Mammary epithelial cell (primary cell): ENCODE measurements at regions of chr1 and their contacts with region 1.

Region 1: DNA sequence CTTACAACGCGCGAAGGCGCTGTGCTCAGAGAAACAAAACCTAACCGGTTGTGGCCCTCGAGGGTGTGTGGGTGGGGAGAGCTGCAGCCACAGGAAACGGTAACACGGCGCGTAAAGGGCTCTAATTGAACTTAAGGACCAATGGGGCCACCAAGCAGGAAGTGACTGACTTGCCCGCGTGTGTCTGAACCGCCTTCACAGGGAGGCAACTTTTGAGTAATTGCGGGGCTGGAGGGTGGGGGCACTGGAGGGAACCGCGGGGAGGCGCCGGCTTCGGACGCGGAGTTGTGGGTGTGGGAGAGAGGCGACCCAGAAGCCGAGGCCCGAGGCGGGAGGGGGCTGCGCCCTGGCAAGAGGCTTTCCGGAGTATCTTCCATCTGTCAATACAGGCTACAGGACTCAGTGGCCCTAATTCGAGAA is 577 bp upstream of the PNRC2 start:
- DNase-seq: peak; percentile 88
- H3K4me3 ChIP-seq: peak overlapping the region; percentile 71 to 99 (median 96)
- H3K27ac ChIP-seq: peak overlapping the region; percentile 95
- H3K4me1 ChIP-seq: peaks cover 37% of the 10 kb centered on the region
- H3K27me3 ChIP-seq: no peaks in the 10 kb centered on the region
- CTCF ChIP-seq: peak in 1 of 2 donors; percentile 44

Region 2: GRCh38 chr1:23809751-23810171 is 149.3 kb before region 1 on chr1:
- CTCF ChIA-PET with region 1: no interaction called
- dilution Hi-C with region 1: no loop called
- in situ Hi-C with region 1: no loop called
- intact Hi-C with region 1: loop called (anchors 5 kb)
- DNase-seq: peak; percentile 45
- H3K4me3 ChIP-seq: no peak overlapping the region
- H3K27ac ChIP-seq: no peak overlapping the region
- H3K4me1 ChIP-seq: no peaks in the 10 kb centered on the region
- H3K27me3 ChIP-seq: no peaks in the 10 kb centered on the region
- CTCF ChIP-seq: peak; percentile 91

Region 3: DNA sequence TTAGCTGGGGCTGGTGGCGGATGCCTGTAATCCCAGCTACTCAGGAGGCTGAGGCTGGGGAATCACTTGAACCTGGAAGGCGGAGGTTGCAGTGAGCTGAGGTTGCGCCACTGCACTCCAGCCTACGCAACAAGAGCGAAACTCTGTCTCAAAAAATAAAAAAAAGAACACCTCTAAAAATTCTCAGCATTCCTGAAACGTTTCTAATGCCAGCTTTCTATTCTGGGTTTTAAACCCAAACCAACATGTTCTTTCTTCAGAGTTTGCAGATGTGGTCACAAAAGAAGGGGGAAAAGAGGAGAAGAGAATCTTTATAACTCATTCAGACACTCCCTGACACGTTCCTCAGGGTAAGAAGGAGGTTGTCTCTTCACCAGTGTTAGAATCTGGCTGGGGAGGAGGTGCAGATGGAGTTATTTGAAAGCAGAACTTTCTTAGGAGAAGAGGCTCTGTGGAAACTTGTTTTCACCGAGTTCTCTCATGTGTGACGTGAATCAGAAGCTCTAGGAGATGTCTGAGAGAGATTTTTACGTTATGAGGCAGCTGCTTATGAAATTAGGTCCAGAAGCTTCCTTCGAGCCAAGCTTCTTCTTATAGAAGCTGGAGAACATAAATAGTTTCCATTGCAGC is 28.1 kb before region 1 on chr1:
- CTCF ChIA-PET with region 1: interaction called, 5 read pairs
- dilution Hi-C with region 1: no loop called
- in situ Hi-C with region 1: no loop called
- intact Hi-C with region 1: loop called (anchors 2 kb)
- DNase-seq: peak; percentile 75
- H3K4me3 ChIP-seq: peak overlapping the region; percentile 27 to 30 (median 27)
- H3K27ac ChIP-seq: peak overlapping the region; percentile 73
- H3K4me1 ChIP-seq: peaks cover 8% of the 10 kb centered on the region
- H3K27me3 ChIP-seq: no peaks in the 10 kb centered on the region
- CTCF ChIP-seq: no peak

Region 4: DNA sequence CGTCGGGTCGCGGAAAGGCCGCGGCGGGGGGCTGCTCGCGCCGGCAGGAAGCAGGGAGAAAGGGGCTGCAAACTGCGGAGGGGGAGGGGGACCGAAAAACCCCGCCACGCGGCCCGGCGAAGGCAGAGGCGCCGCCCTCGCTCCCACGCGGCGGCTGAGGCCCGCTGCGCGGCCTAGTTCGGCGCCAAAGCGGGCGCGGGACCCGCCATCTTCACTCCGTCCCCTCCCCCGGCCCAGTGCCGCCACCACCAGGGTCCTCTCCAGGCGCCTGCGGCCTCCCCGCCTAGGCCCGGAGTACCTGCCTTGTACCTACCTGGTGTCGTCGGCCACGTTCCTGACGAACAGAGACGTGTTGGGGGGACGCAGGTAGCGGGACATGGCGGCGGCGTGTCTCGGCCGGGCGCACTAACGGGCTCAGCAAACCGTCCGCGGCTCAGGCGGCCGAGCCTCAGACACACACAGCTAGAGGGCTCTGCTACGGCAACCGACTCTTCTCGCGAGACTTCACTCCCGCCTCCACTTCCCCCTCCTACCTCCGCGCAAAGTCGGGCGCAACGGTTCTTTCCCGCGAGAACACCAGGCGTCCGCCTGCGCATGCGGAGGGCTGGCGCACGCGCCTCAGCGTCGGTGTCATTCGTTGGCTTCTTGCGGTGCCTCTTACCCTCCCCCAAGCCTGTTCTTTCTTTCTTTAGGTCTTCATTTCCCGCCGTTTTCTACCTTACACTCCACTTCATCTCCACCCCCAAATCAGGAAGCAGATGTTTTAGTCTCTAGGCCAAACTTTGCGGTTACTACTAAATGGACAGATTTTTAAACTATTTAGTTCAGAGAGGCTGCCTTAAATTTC is 21.1 kb after region 1 on chr1 and contains the start of gene SRSF10:
- CTCF ChIA-PET with region 1: no interaction called
- dilution Hi-C with region 1: no loop called
- in situ Hi-C with region 1: no loop called
- intact Hi-C with region 1: loop called (anchors 2 kb)
- DNase-seq: peak; percentile 98
- H3K4me3 ChIP-seq: peak within 1 kb of the TSS; percentile 91 to 99 (median 95)
- H3K27ac ChIP-seq: peak within 1 kb of the TSS; percentile 79
- H3K4me1 ChIP-seq: peaks cover 47% of the 10 kb centered on the region
- H3K27me3 ChIP-seq: no peaks in the 10 kb centered on the region
- CTCF ChIP-seq: peak in 1 of 2 donors; percentile 41
- total RNA-seq, gene SRSF10: 64.2 to 94.7 TPM

Region 5: DNA sequence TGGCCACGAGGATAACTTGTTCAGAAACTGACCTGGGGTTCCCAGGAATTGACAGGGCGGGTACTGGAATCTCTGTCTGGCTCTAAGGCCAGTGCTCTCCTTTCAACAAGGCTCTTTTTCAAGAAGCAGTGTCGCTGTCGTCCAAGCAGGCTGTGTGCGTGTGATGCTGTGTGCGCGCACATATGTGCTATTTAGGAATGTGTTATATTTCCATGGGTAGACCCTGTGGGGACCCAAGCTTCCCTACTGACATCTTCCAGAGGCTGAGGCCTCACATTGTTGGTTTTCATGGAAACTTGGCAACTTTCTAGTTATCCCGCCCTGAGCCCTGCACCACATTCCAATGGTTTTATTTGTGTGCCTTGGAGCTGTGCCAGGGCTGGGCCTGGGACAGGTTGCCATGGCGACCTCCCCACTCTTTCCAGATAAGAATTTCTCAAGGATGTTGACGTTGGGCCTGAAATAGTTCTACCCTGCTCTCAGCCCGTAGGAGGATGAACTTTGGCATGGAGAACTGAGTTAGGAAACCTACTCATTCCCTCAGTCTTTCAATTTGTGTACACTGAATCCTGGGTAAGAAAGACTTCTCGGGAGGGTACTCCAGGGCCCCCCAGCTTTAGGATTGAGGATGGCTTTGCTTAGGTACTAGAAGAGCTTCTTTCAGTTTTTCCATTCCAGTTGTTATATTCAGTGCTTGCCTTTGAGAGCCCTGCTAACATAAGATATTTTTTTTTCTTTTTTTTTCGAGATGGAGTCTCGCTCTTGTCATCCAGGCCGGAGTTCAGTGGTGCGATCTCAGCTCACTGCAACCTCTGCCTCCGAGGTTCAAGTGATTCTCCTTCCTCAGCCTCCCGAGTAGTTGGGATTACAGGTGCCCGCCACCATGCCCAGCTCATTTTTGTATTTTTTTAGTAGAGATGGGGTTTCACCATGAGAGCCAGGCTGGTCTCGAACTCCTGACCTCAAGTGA is 59.8 kb after region 1 on chr1:
- CTCF ChIA-PET with region 1: no interaction called
- dilution Hi-C with region 1: loop called (anchors 5 kb)
- in situ Hi-C with region 1: no loop called
- intact Hi-C with region 1: no loop called
- DNase-seq: peak; percentile 95
- H3K4me3 ChIP-seq: no peak overlapping the region
- H3K27ac ChIP-seq: peak overlapping the region; percentile 89
- H3K4me1 ChIP-seq: peaks cover 33% of the 10 kb centered on the region
- H3K27me3 ChIP-seq: no peaks in the 10 kb centered on the region
- CTCF ChIP-seq: no peak

Region 6: GRCh38 chr1:24027838-24028468 is 68.9 kb after region 1 on chr1:
- CTCF ChIA-PET with region 1: no interaction called
- dilution Hi-C with region 1: no loop called
- in situ Hi-C with region 1: no loop called
- intact Hi-C with region 1: loop called (anchors 1 kb)
- DNase-seq: peak; percentile 47
- H3K4me3 ChIP-seq: no peak overlapping the region
- H3K27ac ChIP-seq: no peak overlapping the region
- H3K4me1 ChIP-seq: peaks cover under 1% of the 10 kb centered on the region
- H3K27me3 ChIP-seq: no peaks in the 10 kb centered on the region
- CTCF ChIP-seq: peak; percentile 58 to 66

Region 7: DNA sequence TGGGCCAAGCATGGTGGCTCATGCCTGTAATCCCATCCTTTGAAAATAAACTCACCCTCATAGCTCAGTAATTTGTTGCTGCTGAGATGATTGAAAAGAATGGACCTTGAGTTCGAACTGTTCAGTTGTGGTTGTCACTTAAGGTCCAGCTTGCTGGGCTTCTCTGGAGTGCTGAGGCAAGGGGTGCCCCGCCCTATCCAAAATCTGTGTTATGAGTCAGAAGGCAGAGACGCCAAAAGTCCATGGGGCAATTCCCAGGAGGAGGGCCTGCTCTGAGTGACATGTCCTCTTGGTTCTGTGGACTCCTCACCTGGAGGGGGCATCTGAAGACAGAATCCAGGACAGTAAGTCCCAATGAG is 88.0 kb after region 1 on chr1:
- CTCF ChIA-PET with region 1: no interaction called
- dilution Hi-C with region 1: no loop called
- in situ Hi-C with region 1: no loop called
- intact Hi-C with region 1: no loop called
- DNase-seq: peak; percentile 67
- H3K4me3 ChIP-seq: no peak overlapping the region
- H3K27ac ChIP-seq: peak overlapping the region; percentile 16
- H3K4me1 ChIP-seq: peaks cover 21% of the 10 kb centered on the region
- H3K27me3 ChIP-seq: no peaks in the 10 kb centered on the region
- CTCF ChIP-seq: no peak

Region 8: GRCh38 chr1:24111996-24112779 is 153.1 kb after region 1 on chr1 and contains the start of gene MYOM3:
- CTCF ChIA-PET with region 1: interaction called, 3 read pairs
- dilution Hi-C with region 1: no loop called
- in situ Hi-C with region 1: no loop called
- intact Hi-C with region 1: loop called (anchors 2 kb)
- DNase-seq: peak; percentile 77
- H3K4me3 ChIP-seq: peak within 1 kb of the TSS in 1 of 3 experiments; percentile 33
- H3K27ac ChIP-seq: peak within 1 kb of the TSS; percentile 55
- H3K4me1 ChIP-seq: peaks cover 36% of the 10 kb centered on the region
- H3K27me3 ChIP-seq: no peaks in the 10 kb centered on the region
- CTCF ChIP-seq: peak; percentile 61 to 83
- total RNA-seq, gene MYOM3: 0.54 to 1.8 TPM